Activated B cell treated with CpG ODN at 0.5 μM for 24 hours (primary cell): ENCODE measurements at regions of chr12 and their contacts with region 1.

Region 1: GRCh38 chr12:55789893-55790292 is 27.6 kb downstream of the SARNP start:
- DNase-seq: no peak
- ATAC-seq: no peak
- H3K4me3 Mint-ChIP-seq: no peak overlapping the region
- H3K27ac Mint-ChIP-seq: no peak overlapping the region
- H3K4me1 Mint-ChIP-seq: no peaks in the 10 kb centered on the region
- H3K27me3 Mint-ChIP-seq: no peaks in the 10 kb centered on the region
- CTCF ChIP-seq: no peak

Region 2: DNA sequence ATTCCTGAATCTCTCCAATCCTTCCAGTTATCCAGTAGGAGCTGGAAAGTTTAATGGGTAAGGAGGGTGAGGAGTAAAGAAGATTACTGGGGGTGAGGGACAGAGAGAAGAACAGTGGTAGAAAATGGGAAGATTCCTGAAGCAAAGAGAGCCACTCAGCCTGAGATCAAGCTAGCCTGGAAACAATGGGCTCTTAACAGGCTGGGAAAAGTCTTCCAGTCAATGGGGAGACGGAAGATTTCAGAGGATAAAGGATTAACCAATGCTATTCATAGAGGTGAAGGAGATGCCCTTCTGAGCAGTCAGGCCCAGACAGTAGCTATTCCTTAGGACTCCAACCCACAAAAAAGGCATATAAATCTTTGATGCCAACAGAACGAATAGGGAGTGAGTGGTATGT is 32.2 kb before region 1 on chr12:
- CTCF ChIA-PET with region 1: no interaction called
- POLR2A ChIA-PET with region 1: no interaction called
- intact Hi-C with region 1: loop called (anchors 5 kb)
- DNase-seq: no peak
- ATAC-seq: no peak
- H3K4me3 Mint-ChIP-seq: no peak overlapping the region
- H3K27ac Mint-ChIP-seq: peak overlapping the region; percentile 7
- H3K4me1 Mint-ChIP-seq: no peaks in the 10 kb centered on the region
- H3K27me3 Mint-ChIP-seq: no peaks in the 10 kb centered on the region
- CTCF ChIP-seq: no peak